Body of pancreas (tissue), 4 donors: ENCODE measurements at regions of chrX and their contacts with region 1.

Region 1: GRCh38 chrX:43958529-43958928 is 14.7 kb downstream of the NDP start:
- DNase-seq: peak; percentile 15 to 53 (median 28)
- ATAC-seq: peak; percentile 66
- H3K4me3 ChIP-seq: no peak overlapping the region
- H3K27ac ChIP-seq: no peak overlapping the region
- H3K4me1 ChIP-seq: no peaks in the 10 kb centered on the region
- H3K27me3 ChIP-seq: no peaks in the 10 kb centered on the region
- CTCF ChIP-seq: peak; percentile 25 to 89 (median 83)
- POLR2A ChIP-seq: no peak

Region 2: DNA sequence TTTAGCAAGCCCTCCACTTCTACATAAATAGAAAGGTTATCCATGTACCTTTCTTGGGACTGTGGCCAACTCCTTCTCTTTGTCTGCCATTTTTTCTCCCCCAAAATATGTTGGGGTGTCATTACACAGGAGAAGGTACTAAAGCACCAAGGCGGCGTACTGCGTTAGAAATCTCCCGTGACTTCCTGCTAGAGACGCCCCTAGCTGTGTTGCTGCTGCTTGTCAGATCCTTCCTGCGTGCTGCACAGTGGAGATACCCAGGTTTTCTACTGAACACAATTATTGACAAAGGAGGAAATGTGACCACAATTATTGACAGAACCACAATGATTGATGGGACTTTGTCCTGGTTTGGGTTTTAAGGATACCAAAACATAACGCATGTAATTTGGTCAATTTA is 287.2 kb after region 1 on chrX:
- intact Hi-C with region 1: loop called (anchors 5 kb)
- DNase-seq: no peak
- ATAC-seq: no peak
- H3K4me3 ChIP-seq: no peak overlapping the region
- H3K27ac ChIP-seq: no peak overlapping the region
- H3K4me1 ChIP-seq: no peaks in the 10 kb centered on the region
- H3K27me3 ChIP-seq: no peaks in the 10 kb centered on the region
- CTCF ChIP-seq: no peak
- POLR2A ChIP-seq: no peak

Region 3: GRCh38 chrX:44291468-44292113 is 333.1 kb after region 1 on chrX:
- intact Hi-C with region 1: no loop called
- DNase-seq: no peak
- ATAC-seq: no peak
- H3K4me3 ChIP-seq: no peak overlapping the region
- H3K27ac ChIP-seq: no peak overlapping the region
- H3K4me1 ChIP-seq: no peaks in the 10 kb centered on the region
- H3K27me3 ChIP-seq: no peaks in the 10 kb centered on the region
- CTCF ChIP-seq: no peak
- POLR2A ChIP-seq: no peak